ENCODE measurements at regions of chr13 and their contacts with region 1.

Region 1: GRCh38 chr13:28636674-28637317 is 22.1 kb upstream of the POMP start:
- DNase-seq: peak; percentile 81 to 90 (median 86)
- H3K4me3 ChIP-seq: no peak overlapping the region
- H3K27ac ChIP-seq: no peak overlapping the region
- H3K4me1 ChIP-seq: peaks cover 5 to 18% (median 6%) of the 10 kb centered on the region in 4 experiments
- H3K27me3 ChIP-seq: peaks cover 0 to 3% (median 0%) of the 10 kb centered on the region in 5 experiments

Region 2: DNA sequence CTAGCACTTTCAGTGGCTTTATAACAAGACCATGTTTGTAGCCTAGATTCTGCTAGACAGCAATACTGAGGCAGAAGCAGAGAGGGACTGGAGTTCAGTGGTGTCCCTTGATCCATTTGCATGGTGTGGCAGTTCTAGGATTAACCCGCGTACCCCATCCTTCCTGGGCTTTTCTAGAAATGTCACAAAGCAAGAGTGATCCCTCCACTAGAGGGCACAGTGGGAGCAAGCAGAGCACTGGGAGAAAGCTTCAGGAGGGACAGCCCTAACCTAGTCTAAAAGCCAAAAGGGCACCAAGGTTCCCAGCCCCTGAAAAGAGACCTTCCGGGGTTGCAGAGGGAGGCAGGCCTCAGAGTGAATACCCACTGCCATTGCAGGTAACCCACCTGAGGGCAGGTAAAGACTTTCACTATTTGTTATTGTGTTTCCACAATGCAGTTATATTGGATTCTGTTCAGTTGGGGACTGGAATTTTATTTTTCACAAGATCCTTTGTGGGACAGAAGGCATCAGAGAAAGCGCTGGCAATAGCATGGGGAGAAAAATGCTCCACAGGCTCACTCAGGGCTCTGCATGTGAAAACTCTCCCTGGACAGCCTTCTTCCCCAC is 312.5 kb before region 1 on chr13:
- CTCF ChIA-PET with region 1: interaction called, 45 read pairs
- POLR2A ChIA-PET with region 1: no interaction called
- DNase-seq: peak; percentile 74 to 80 (median 76)
- H3K4me3 ChIP-seq: no peak overlapping the region
- H3K27ac ChIP-seq: no peak overlapping the region
- H3K4me1 ChIP-seq: peaks cover 0 to 7% (median 0%) of the 10 kb centered on the region in 4 experiments
- H3K27me3 ChIP-seq: peaks cover 0 to 5% (median 0%) of the 10 kb centered on the region in 5 experiments

Region 3: DNA sequence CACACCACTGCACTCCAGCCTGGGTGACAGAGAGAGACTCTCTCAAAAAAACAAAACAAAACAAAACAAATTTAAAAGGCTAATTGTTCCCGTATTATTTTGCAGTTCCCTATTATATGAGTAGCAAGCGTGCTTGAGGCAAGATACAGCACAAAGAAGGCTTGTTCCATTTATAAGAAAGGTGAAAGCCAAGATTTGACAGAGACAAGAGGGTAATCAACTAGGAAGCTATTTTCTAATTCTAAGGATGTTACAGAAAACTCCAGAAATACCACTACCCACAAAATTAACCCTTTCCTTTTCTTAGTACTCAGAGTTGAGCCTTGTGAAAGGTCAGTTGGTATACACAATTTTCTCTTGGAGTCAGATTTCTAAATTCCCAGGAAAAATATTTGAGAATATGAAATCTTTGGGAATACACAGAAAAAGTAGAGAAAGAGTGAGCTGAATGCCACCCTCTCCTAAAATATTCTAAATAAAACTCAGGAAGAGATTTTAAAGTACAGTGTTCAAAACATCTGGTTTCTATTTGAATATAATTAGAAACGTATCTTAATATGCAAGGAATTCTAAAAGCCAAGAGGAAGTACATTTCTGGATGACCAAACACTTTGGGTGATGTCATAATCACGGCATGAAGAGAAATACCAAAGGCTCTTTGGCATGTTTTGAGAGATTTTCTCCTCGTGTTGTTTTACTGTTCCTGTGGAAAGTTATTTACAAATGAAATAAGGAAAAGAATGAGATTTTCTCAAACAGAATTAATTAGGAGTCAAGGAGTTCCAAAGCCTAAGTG is 78.9 kb before region 1 on chr13:
- CTCF ChIA-PET with region 1: no interaction called
- POLR2A ChIA-PET with region 1: no interaction called
- DNase-seq: no peak
- H3K4me3 ChIP-seq: no peak overlapping the region
- H3K27ac ChIP-seq: no peak overlapping the region
- H3K4me1 ChIP-seq: no peaks in the 10 kb centered on the region
- H3K27me3 ChIP-seq: no peaks in the 10 kb centered on the region

Measured in common myeloid progenitor, CD34-positive (primary cell).